ENCODE measurements at regions of chr3 and their contacts with region 1.

Region 1: DNA sequence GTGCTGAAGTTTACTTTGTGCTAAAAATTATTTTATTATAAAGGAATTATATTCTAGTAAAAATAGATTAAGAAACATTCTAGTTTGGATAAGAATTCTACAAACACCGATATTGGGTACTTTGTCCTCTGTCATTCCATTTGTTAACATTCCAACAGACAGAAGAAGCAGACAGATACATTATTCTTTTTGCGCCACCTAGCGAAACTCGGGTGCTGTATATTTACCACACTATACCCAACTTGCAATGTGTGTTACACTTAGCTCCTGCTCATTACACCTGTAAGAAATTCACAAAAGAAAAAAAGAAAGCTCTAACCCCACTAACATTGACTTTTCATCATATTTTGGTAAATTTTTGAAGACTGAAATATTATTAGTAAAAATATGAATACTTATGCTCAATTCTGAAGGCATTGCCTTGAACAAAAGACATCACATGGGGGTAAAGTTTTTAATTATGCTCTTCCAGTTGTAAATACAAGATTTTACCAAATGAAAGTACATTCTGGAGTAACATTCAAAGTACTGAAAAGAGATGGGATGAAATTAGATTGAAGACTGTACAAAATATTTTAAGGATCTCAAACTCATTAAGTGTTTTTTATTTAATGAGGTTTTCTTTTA is 136.5 kb upstream of the MLF1 start:
- DNase-seq: peak; percentile 40
- ATAC-seq: peak; percentile 96
- H3K4me3 ChIP-seq: no peak overlapping the region
- H3K27ac ChIP-seq: no peak overlapping the region
- H3K4me1 ChIP-seq: no peaks in the 10 kb centered on the region
- H3K27me3 ChIP-seq: no peaks in the 10 kb centered on the region
- CTCF ChIP-seq: peak; percentile 58 to 88 (median 68); a peak in 4 of 6 replicates
- EP300 ChIP-seq: no peak
- POLR2A ChIP-seq: no peak
- RAD21 ChIP-seq: peak; percentile 94

Region 2: DNA sequence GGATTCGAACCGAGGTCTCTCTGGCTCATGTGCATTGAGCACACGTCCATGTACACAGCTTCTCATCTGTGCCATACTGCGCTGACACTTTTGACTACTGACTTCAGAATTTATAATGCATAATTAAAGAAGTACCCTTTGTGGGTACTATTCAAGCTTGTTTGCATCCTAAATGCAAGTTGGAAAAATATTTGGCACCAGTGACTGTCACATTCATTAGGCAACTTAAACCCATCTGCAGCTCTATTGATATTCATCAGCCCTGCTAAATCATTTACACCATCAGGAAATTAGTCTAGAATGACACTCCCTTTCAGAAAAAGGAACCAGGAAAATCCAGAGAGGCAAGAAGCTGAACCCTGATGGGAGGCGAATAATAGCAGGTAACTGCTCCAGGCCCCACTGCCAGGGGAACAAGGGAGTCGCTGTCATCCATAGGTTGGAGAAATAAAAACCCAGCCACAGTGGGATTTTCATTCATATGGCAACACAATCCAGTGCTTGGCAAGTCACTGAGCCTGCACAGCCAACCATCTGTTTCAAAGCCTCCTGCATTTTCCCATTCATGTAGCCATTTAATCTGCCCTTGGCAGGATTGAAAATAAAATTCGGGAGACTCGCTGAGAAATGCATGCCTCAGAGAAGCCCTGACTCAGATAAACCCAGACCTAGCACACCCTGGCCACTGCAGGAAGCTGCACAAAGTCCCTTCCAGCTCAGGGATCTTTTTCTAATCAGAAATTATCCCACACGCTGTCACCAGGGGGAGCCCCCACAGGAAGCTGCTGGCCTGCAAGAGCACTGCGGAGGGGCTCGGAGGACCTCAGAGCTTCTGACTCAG is 828.3 kb before region 1 on chr3:
- CTCF ChIA-PET with region 1: interaction called, 15 read pairs
- POLR2A ChIA-PET with region 1: no interaction called
- RAD21 ChIA-PET with region 1: interaction called, 5 read pairs
- SMC1A ChIA-PET with region 1: interaction called, 3 read pairs
- in situ Hi-C with region 1: no loop called
- intact Hi-C with region 1: no loop called
- DNase-seq: no peak
- ATAC-seq: peak; percentile 97
- H3K4me3 ChIP-seq: no peak overlapping the region
- H3K27ac ChIP-seq: no peak overlapping the region
- H3K4me1 ChIP-seq: no peaks in the 10 kb centered on the region
- H3K27me3 ChIP-seq: peaks cover 0 to 3% of the 10 kb centered on the region in 2 experiments; a peak in 2 of 4 replicates
- CTCF ChIP-seq: peak; percentile 60 to 85 (median 84)
- EP300 ChIP-seq: no peak
- POLR2A ChIP-seq: no peak
- RAD21 ChIP-seq: peak; percentile 39; the same call in 1 of the 2 replicates

Region 3: DNA sequence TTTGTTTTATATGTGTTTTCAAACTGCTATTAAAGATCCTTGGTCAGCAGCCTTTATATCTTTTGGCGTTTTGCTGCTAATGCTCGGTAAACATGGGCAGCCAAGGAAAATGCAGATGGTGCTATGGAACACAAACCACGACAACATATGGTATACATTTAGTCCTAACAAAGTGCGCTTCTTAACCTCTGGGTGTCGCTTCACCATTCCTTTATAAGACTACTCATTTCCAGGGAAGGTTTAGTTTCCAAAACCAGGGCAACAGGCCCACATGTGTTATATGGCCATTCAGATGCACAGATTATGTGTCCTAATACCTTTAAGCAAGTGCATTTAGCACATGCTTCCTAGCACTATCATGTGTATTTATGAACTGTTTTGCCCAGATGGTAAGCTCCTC is 343.0 kb before region 1 on chr3:
- CTCF ChIA-PET with region 1: interaction called, 18 read pairs
- POLR2A ChIA-PET with region 1: no interaction called
- RAD21 ChIA-PET with region 1: interaction called, 9 read pairs
- SMC1A ChIA-PET with region 1: interaction called, 5 read pairs
- in situ Hi-C with region 1: no loop called
- intact Hi-C with region 1: no loop called
- DNase-seq: no peak
- ATAC-seq: no peak
- H3K4me3 ChIP-seq: no peak overlapping the region
- H3K27ac ChIP-seq: no peak overlapping the region
- H3K4me1 ChIP-seq: no peaks in the 10 kb centered on the region
- H3K27me3 ChIP-seq: peaks cover 2 to 12% of the 10 kb centered on the region in 2 experiments
- CTCF ChIP-seq: no peak; a peak in 1 of 6 replicates
- EP300 ChIP-seq: no peak
- POLR2A ChIP-seq: no peak
- RAD21 ChIP-seq: 0 out of 2 replicates have a peak, but pooled peaks have one; percentile 2

Region 4: GRCh38 chr3:158297940-158298339 is 136.6 kb before region 1 on chr3:
- CTCF ChIA-PET with region 1: interaction called, 10 read pairs
- POLR2A ChIA-PET with region 1: no interaction called
- RAD21 ChIA-PET with region 1: interaction called, 4 read pairs
- SMC1A ChIA-PET with region 1: no interaction called
- in situ Hi-C with region 1: no loop called
- intact Hi-C with region 1: no loop called
- DNase-seq: no peak
- ATAC-seq: no peak
- H3K4me3 ChIP-seq: no peak overlapping the region
- H3K27ac ChIP-seq: no peak overlapping the region
- H3K4me1 ChIP-seq: no peaks in the 10 kb centered on the region
- H3K27me3 ChIP-seq: no peaks in the 10 kb centered on the region
- CTCF ChIP-seq: no peak
- EP300 ChIP-seq: no peak
- POLR2A ChIP-seq: no peak
- RAD21 ChIP-seq: no peak

Region 5: DNA sequence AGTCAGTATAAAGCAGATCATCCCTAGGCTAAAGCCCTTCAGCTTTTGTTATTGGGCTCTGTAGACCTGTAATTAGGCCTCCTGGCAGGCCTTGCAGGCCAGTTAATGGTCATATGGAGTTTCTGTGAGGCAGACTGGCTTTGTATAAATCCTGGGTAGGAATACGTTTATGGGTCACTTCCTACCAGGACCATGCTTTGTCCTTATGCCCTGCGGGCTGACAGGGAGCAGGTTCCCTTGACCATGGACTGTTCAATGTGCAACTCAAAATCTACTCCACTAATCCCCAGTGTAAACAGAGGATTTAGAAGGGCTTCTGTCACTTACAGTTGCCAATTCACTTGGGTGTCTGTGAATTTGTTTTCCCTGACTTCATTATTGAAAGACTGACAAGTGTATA is 66.3 kb before region 1 on chr3:
- CTCF ChIA-PET with region 1: interaction called, 12 read pairs
- POLR2A ChIA-PET with region 1: no interaction called
- RAD21 ChIA-PET with region 1: interaction called, 3 read pairs
- SMC1A ChIA-PET with region 1: interaction called, 4 read pairs
- in situ Hi-C with region 1: no loop called
- intact Hi-C with region 1: no loop called
- DNase-seq: no peak
- ATAC-seq: no peak
- H3K4me3 ChIP-seq: no peak overlapping the region
- H3K27ac ChIP-seq: no peak overlapping the region
- H3K4me1 ChIP-seq: no peaks in the 10 kb centered on the region
- H3K27me3 ChIP-seq: no peaks in the 10 kb centered on the region
- CTCF ChIP-seq: no peak
- EP300 ChIP-seq: no peak
- POLR2A ChIP-seq: no peak
- RAD21 ChIP-seq: no peak

Region 6: GRCh38 chr3:158532099-158532734 is 97.7 kb after region 1 on chr3:
- CTCF ChIA-PET with region 1: interaction called, 13 read pairs
- POLR2A ChIA-PET with region 1: no interaction called
- RAD21 ChIA-PET with region 1: interaction called, 9 read pairs
- SMC1A ChIA-PET with region 1: interaction called, 7 read pairs
- in situ Hi-C with region 1: no loop called
- intact Hi-C with region 1: no loop called
- DNase-seq: no peak
- ATAC-seq: peak; percentile 62; the same call in 2 of the 3 replicates
- H3K4me3 ChIP-seq: no peak overlapping the region
- H3K27ac ChIP-seq: no peak overlapping the region
- H3K4me1 ChIP-seq: no peaks in the 10 kb centered on the region
- H3K27me3 ChIP-seq: no peaks in the 10 kb centered on the region
- CTCF ChIP-seq: peak; percentile 48 to 60 (median 49)
- EP300 ChIP-seq: no peak
- POLR2A ChIP-seq: no peak
- RAD21 ChIP-seq: peak; percentile 82